ENCODE measurements at regions of chr13 and their contacts with region 1.

Region 1: GRCh38 chr13:95191821-95192563 is 109.3 kb downstream of the ABCC4 start:
- DNase-seq: peak; percentile 72 to 85
- ATAC-seq: peak; percentile 81 to 85 (median 84)
- H3K4me3 ChIP-seq: no peak overlapping the region
- H3K27ac ChIP-seq: peak overlapping the region; percentile 71
- H3K4me1 ChIP-seq: peaks cover 45% of the 10 kb centered on the region
- H3K27me3 ChIP-seq: no peaks in the 10 kb centered on the region
- CTCF ChIP-seq: peak; percentile 86

Region 2: GRCh38 chr13:95269756-95270155 is 77.8 kb after region 1 on chr13:
- intact Hi-C with region 1: loop called in 1 of 2 experiments (anchors 5 kb)
- DNase-seq: no peak
- ATAC-seq: no peak
- H3K4me3 ChIP-seq: no peak overlapping the region
- H3K27ac ChIP-seq: peak overlapping the region; percentile 84
- H3K4me1 ChIP-seq: peaks cover 29% of the 10 kb centered on the region
- H3K27me3 ChIP-seq: no peaks in the 10 kb centered on the region
- CTCF ChIP-seq: no peak

Region 3: GRCh38 chr13:95284436-95284835 is 92.4 kb after region 1 on chr13:
- intact Hi-C with region 1: loop called in 1 of 2 experiments (anchors 5 kb)
- DNase-seq: no peak
- ATAC-seq: no peak
- H3K4me3 ChIP-seq: no peak overlapping the region
- H3K27ac ChIP-seq: no peak overlapping the region
- H3K4me1 ChIP-seq: peaks cover 26% of the 10 kb centered on the region
- H3K27me3 ChIP-seq: no peaks in the 10 kb centered on the region
- CTCF ChIP-seq: no peak

Region 4: GRCh38 chr13:95301183-95301967 is 109.4 kb after region 1 on chr13 and contains the start of gene ABCC4:
- intact Hi-C with region 1: loop called in 1 of 2 experiments (anchors 2 kb)
- DNase-seq: peak; percentile 69 to 78
- ATAC-seq: peak; percentile 79 to 88 (median 84)
- H3K4me3 ChIP-seq: peak within 1 kb of the TSS; percentile 89
- H3K27ac ChIP-seq: peak within 1 kb of the TSS; percentile 90
- H3K4me1 ChIP-seq: peaks cover 38% of the 10 kb centered on the region
- H3K27me3 ChIP-seq: no peaks in the 10 kb centered on the region
- CTCF ChIP-seq: no peak
- total RNA-seq, gene ABCC4: 4.3 to 25.2 (median 6.6) TPM

Region 5: GRCh38 chr13:95378603-95379002 is 186.6 kb after region 1 on chr13:
- intact Hi-C with region 1: loop called in 1 of 2 experiments (anchors 1 kb)
- DNase-seq: peak; percentile 14 to 50
- ATAC-seq: peak; percentile 81 to 91 (median 83)
- H3K4me3 ChIP-seq: no peak overlapping the region
- H3K27ac ChIP-seq: peak overlapping the region; percentile 72
- H3K4me1 ChIP-seq: peaks cover 19% of the 10 kb centered on the region
- H3K27me3 ChIP-seq: no peaks in the 10 kb centered on the region
- CTCF ChIP-seq: no peak

Region 6: DNA sequence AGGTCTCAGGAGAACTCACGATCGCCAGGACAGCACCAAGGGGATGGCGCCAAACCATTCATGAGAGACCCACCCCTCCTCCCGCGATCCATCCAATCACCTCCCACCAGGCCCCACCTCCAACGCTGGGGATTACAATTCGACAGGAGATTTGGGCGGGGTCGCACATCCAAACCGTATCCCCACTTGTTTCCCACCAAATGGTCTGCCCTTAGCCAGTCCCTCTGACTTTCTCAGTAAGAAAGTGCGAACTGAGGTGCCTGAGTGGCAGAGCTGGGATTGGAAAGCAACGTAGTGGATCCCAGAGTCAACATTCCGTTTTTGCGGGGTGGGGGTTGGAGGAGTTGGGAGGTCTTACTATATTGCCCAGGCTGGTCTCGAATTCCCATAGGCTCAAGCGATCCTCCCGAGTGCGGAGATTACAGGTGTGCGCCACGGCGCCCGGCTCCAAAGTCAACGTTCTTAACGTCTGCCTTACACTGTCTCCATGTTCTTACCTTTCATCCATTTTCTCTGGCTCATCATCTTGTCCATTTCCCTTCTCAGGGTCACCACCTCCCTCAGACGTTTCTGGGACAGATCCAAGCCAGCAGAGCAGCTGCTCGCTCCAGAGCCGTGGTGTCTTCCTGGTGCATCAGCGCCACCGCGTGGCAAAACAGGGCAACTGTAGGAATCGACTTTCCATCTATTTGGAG is 212.0 kb after region 1 on chr13:
- intact Hi-C with region 1: loop called (anchors 1 kb)
- DNase-seq: peak; percentile 76 to 90
- ATAC-seq: peak; percentile 88 to 98 (median 92)
- H3K4me3 ChIP-seq: peak overlapping the region; percentile 57
- H3K27ac ChIP-seq: no peak overlapping the region
- H3K4me1 ChIP-seq: no peaks in the 10 kb centered on the region
- H3K27me3 ChIP-seq: no peaks in the 10 kb centered on the region
- CTCF ChIP-seq: peak; percentile 95

Region 7: DNA sequence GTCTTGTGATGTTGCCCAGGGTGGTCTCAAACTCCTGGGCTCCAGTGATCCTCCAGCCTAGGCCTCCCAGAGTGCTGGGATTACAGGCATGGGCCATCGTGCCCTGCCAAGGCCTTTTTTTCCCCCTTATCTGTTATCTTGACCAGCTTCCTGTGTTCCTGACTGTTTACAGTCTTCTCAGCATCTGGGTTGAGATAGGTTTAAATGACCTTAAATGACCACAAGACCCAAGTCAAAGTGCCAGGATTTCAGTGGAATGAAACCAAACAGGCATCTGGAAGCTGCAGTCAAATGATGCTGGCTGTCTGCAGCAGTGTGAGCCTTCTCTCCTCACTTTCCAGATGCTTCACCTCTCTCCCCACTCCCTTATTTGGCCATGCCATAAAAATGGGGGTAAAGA is 246.3 kb after region 1 on chr13:
- intact Hi-C with region 1: no loop called
- DNase-seq: no peak
- ATAC-seq: no peak
- H3K4me3 ChIP-seq: no peak overlapping the region
- H3K27ac ChIP-seq: no peak overlapping the region
- H3K4me1 ChIP-seq: no peaks in the 10 kb centered on the region
- H3K27me3 ChIP-seq: peaks cover 0 to 6% (median 0%) of the 10 kb centered on the region in 3 donors
- CTCF ChIP-seq: no peak

Region 8: GRCh38 chr13:95479731-95480130 is 287.7 kb after region 1 on chr13:
- intact Hi-C with region 1: loop called in 1 of 2 experiments (anchors 2 kb)
- DNase-seq: no peak
- ATAC-seq: no peak
- H3K4me3 ChIP-seq: no peak overlapping the region
- H3K27ac ChIP-seq: no peak overlapping the region
- H3K4me1 ChIP-seq: no peaks in the 10 kb centered on the region
- H3K27me3 ChIP-seq: no peaks in the 10 kb centered on the region
- CTCF ChIP-seq: no peak

Measured in psoas muscle (tissue), 8 donors.